ENCODE measurements at regions of chr15 and their contacts with region 1.

Region 1: GRCh38 chr15:74373731-74374647 is 6.5 kb upstream of the CYP11A1 start:
- DNase-seq: peak; percentile 92
- H3K4me3 ChIP-seq: peak overlapping the region; percentile 38 to 50
- H3K27ac ChIP-seq: peak overlapping the region in 1 of 2 donors; percentile 45
- H3K4me1 ChIP-seq: peaks cover 0 to 5% of the 10 kb centered on the region in 2 donors
- H3K27me3 ChIP-seq: no peaks in the 10 kb centered on the region
- CTCF ChIP-seq: peak; percentile 88 to 92 (median 90)
- POLR2A ChIP-seq: no peak

Region 2: DNA sequence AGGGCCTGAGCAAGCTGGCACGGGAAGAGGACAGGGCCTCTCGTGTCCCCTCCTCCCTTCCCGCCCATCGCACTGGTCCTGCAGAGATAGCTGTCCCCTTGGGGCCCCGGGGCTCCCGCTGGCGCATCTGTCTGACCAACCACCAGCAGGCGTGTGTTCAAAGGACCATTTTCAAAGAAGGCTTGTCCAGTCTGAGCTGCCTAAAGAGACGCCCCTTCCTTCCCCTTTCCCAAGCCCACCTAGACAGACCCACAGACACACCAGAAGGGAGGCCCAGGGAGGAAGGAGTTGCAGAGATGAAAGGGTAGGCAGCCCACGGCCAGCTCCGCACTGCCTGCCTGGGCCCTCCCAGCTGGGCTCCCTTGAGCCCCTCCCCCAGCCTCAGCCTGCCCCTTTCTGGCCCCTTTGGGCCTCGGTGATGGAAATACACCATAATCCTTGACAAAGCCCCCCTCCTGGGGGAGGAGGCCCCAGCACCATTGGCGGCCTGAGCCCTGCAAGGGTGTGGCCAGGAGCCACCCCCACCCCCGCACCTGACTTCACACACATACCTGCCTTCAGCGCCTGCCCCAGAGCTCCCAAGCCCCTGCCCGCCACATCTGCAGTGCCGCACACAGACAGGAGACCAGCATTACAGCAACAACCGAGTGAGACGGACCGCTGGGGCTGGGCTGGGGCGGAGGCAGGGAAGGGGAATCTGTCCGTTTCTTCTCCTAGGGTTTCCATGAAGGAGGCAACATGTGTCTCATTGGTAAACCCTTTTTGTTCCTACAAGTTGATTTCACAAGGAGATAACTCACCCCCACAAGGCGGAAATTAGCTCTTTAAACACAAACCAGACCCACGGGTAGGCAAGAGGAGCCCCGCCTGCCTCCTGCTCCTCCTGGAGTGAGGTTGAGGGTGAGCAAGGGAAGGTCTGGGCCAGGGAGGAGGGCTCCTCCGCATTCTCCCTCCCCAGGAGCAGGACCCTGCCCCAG is 171.2 kb before region 1 on chr15 and contains the start of gene STRA6:
- intact Hi-C with region 1: no loop called
- DNase-seq: no peak
- H3K4me3 ChIP-seq: no peak within 1 kb of the TSS
- H3K27ac ChIP-seq: peak within 1 kb of the TSS; percentile 14 to 35
- H3K4me1 ChIP-seq: peaks cover 0 to 6% of the 10 kb centered on the region in 2 donors
- H3K27me3 ChIP-seq: no peaks in the 10 kb centered on the region
- CTCF ChIP-seq: no peak
- POLR2A ChIP-seq: no peak
- total RNA-seq, gene STRA6: 0.26 to 62.6 (median 11.6) TPM in 3 of 4 donors, not detected in the other

Region 3: DNA sequence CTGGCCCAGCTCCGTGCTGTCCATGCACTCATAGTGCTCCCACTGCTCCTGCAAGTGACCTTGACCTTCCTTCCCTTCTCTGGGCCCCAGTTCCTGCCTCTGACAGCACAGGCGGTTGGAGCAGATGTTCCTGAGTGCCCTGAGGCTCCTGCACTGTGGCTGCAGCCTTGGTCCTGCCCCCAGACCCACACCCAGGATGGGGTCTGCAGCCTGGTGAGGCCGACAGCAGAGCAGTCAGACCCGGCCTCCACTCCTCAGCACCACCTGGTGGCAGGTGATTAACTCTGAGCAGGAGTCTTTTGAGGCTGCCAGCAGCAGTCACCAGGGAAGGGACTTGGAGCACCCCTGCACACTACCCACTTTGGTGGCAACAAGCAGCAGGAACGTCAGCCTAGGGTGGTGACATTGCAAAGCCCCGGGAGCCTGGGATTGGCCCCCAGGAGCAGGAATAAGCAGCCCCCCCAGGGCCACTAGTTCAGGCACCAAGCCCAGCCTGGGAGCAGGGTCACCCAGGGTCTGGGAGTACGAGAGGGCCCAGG is 71.1 kb before region 1 on chr15:
- intact Hi-C with region 1: no loop called
- DNase-seq: peak in 1 of 2 donors; percentile 43
- H3K4me3 ChIP-seq: no peak overlapping the region
- H3K27ac ChIP-seq: no peak overlapping the region
- H3K4me1 ChIP-seq: no peaks in the 10 kb centered on the region
- H3K27me3 ChIP-seq: no peaks in the 10 kb centered on the region
- CTCF ChIP-seq: peak; percentile 47 to 69 (median 63)
- POLR2A ChIP-seq: no peak

Region 4: GRCh38 chr15:74620636-74621545 is 246.9 kb after region 1 on chr15:
- intact Hi-C with region 1: loop called (anchors 10 kb)
- DNase-seq: peak in 1 of 2 donors; percentile 36
- H3K4me3 ChIP-seq: no peak overlapping the region
- H3K27ac ChIP-seq: no peak overlapping the region
- H3K4me1 ChIP-seq: peaks cover 0 to 7% of the 10 kb centered on the region in 2 donors
- H3K27me3 ChIP-seq: no peaks in the 10 kb centered on the region
- CTCF ChIP-seq: peak; percentile 14 to 53 (median 48)
- POLR2A ChIP-seq: no peak

Region 5: GRCh38 chr15:74768771-74769342 is 394.9 kb after region 1 on chr15:
- intact Hi-C with region 1: loop called (anchors 5 kb)
- DNase-seq: peak; percentile 55 to 56
- H3K4me3 ChIP-seq: no peak overlapping the region
- H3K27ac ChIP-seq: no peak overlapping the region
- H3K4me1 ChIP-seq: no peaks in the 10 kb centered on the region
- H3K27me3 ChIP-seq: no peaks in the 10 kb centered on the region
- CTCF ChIP-seq: peak; percentile 76 to 90 (median 80)
- POLR2A ChIP-seq: no peak

Measured in uterus (tissue), 4 donors.